PC-3 (cell line): ENCODE measurements at regions of chrX and their contacts with region 1.

Region 1: GRCh38 chrX:53071604-53072417 is 10.4 kb upstream of the TSPYL2 start:
- DNase-seq: peak; percentile 89
- ATAC-seq: peak; percentile 92
- H3K4me3 ChIP-seq: peak overlapping the region; percentile 80
- H3K27ac ChIP-seq: no peak overlapping the region
- H3K4me1 ChIP-seq: peaks cover 7% of the 10 kb centered on the region; the same call in 1 of the 2 replicates
- H3K27me3 ChIP-seq: no peaks in the 10 kb centered on the region
- CTCF ChIP-seq: peak; percentile 82

Region 2: GRCh38 chrX:52923781-52924241 is 148.0 kb before region 1 on chrX:
- CTCF ChIA-PET with region 1: no interaction called
- POLR2A ChIA-PET with region 1: no interaction called
- intact Hi-C with region 1: no loop called
- DNase-seq: peak; percentile 61
- ATAC-seq: peak; percentile 55
- H3K4me3 ChIP-seq: peak overlapping the region; percentile 17; the same call in 1 of the 2 replicates
- H3K27ac ChIP-seq: peak overlapping the region; percentile 61
- H3K4me1 ChIP-seq: peaks cover 13% of the 10 kb centered on the region
- H3K27me3 ChIP-seq: no peaks in the 10 kb centered on the region
- CTCF ChIP-seq: no peak

Region 3: DNA sequence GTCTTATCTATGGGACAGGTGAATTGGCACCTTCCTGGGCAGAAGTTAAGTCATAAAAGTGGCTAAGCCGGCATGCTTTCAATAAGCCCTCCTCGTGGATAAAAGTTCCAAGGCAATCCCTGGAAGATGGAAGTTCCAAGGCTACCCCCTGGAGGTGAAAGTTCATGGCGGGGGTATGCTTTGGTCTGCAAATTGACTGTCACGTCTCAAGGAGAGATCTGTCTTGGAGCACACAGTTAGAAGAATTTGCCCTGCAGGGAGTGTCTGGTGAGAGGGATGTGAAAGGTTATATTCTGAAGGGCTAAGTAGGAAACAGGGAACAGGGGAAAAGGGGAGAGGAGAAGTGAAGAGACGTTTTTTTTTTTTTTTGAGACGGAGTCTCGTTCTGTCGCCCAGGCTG is 49.4 kb before region 1 on chrX:
- CTCF ChIA-PET with region 1: no interaction called
- POLR2A ChIA-PET with region 1: no interaction called
- intact Hi-C with region 1: no loop called
- DNase-seq: no peak
- ATAC-seq: no peak
- H3K4me3 ChIP-seq: no peak overlapping the region
- H3K27ac ChIP-seq: no peak overlapping the region
- H3K4me1 ChIP-seq: no peaks in the 10 kb centered on the region
- H3K27me3 ChIP-seq: no peaks in the 10 kb centered on the region
- CTCF ChIP-seq: no peak

Region 4: DNA sequence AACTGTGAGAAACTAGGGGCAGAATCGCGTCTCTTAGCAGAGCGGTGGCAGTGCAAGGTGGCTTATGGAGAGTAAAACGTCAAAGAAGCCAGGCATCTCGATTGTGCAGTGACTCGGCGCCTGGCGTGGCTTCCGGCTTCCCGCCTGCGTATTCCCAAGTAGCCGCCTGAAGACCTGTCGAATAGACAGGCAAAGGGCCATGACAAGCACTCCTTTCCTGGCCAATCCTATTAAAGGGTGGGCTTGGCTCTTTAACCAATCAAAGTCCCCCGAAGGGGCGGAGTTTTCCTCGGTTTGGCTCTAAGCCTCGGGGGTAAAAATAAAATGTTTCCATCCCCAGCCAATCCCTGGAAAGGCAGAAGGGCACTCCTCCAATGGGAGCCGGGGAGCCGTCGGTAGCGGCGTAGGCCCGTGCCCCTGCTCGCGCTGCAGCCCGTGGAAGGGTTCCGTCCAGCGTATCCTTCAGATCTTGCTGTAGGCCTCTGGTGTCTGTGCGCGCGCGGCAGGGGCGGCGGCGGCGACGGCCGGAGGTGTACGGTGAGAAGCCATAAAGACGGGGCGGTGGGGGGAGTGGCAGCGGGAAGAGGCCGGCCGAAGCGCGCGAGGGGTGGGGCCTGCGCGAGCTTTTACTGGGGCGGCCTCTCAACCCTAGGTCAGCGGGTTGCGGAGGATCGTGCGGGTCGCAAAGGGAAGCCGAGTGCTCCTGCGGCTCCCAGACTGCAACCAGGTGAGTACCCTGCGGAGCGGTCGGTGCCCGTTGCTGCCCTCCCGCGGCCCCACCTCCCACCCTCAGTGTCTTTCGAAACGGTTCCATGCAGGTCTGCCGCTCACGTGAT is 22.2 kb after region 1 on chrX and contains the start of gene KANTR:
- CTCF ChIA-PET with region 1: no interaction called
- POLR2A ChIA-PET with region 1: no interaction called
- intact Hi-C with region 1: loop called (anchors 1 kb)
- DNase-seq: peak; percentile 97
- ATAC-seq: peak; percentile 83
- H3K4me3 ChIP-seq: peak within 1 kb of the TSS; percentile 77
- H3K27ac ChIP-seq: peak within 1 kb of the TSS; percentile 88
- H3K4me1 ChIP-seq: peaks cover 10% of the 10 kb centered on the region; the same call in 1 of the 2 replicates
- H3K27me3 ChIP-seq: no peaks in the 10 kb centered on the region
- CTCF ChIP-seq: no peak
- total RNA-seq, gene KANTR: 9.3 and 9.7 TPM in 2 replicates

Region 5: DNA sequence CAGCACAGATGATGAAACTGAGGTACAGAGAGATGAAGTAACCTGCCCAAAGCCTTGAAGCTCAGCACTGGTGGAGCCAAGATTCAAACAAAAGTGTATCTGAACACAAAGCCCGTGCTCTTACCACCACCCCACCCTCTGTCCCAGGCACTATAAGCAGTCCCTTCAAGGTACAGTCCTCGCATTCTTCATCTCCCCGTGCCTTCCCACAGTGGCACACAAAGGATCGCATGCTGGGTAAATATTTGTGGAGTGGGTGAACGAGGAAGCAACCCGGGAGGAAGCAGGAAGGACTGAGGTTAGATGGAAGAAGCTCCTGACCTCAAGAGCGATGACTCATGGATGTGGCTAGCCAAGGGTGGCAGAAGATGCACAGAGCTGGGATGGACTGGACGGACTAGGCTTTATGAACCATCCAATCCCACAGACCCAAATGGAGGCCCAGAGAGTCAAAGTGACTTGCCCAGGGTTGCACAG is 191.1 kb after region 1 on chrX:
- CTCF ChIA-PET with region 1: no interaction called
- POLR2A ChIA-PET with region 1: no interaction called
- intact Hi-C with region 1: no loop called
- DNase-seq: peak; percentile 87
- ATAC-seq: peak; percentile 72
- H3K4me3 ChIP-seq: peak overlapping the region; percentile 23; the same call in 1 of the 2 replicates
- H3K27ac ChIP-seq: peak overlapping the region; percentile 98
- H3K4me1 ChIP-seq: peaks cover 53% of the 10 kb centered on the region
- H3K27me3 ChIP-seq: no peaks in the 10 kb centered on the region
- CTCF ChIP-seq: no peak

Region 6: GRCh38 chrX:53356186-53356585 is 284.4 kb after region 1 on chrX:
- CTCF ChIA-PET with region 1: no interaction called
- POLR2A ChIA-PET with region 1: no interaction called
- intact Hi-C with region 1: no loop called
- DNase-seq: peak; percentile 36
- ATAC-seq: no peak
- H3K4me3 ChIP-seq: no peak overlapping the region
- H3K27ac ChIP-seq: no peak overlapping the region
- H3K4me1 ChIP-seq: no peaks in the 10 kb centered on the region
- H3K27me3 ChIP-seq: no peaks in the 10 kb centered on the region
- CTCF ChIP-seq: no peak